ENCODE measurements at regions of chr6 and their contacts with region 1.

Region 1: DNA sequence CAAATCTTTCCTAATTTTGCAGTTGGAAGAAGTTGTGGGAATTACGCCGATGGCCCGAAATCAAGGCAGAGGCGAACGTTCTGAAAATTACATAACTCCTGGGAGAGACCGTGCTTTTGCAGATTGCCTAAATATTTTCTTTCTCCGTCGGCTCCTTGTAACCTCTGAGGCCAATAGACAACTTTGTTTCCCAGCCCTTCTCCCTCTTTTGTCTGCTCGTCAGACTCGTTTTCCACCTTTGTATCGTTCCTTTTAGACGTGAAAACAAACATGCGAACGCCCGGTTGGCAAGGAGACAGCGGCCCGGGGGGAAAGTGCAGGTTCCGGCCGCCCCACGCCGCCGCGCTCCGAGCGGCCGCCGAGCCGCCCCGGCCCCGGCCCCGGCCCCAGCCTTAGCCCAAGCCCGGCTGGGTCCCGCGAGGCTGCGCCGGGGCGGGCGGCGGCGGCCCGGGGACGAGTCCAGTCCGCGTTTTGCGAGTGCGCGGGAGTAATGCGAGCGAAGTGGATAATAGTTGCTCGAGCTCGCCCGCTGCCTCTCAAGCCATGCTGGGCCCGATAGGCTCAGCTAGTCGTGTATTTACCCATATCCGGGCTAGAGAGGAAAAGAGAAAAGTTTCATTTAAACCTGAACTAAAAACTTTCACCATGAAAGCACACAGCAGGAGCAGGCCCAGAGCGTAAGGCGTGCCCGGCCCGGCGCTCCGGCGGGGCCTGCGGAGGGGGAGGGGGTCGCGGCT is at the start of gene ARID1B:
- DNase-seq: no peak
- ATAC-seq: peak; percentile 59
- H3K4me3 ChIP-seq: peak within 1 kb of the TSS; percentile 92
- H3K27ac ChIP-seq: peak within 1 kb of the TSS; percentile 94
- H3K4me1 ChIP-seq: peaks cover 17% of the 10 kb centered on the region
- H3K27me3 ChIP-seq: no peaks in the 10 kb centered on the region
- CTCF ChIP-seq: no peak
- EP300 ChIP-seq: no peak
- POLR2A ChIP-seq: peak; percentile 76
- RAD21 ChIP-seq: no peak
- polyA plus RNA-seq, gene ARID1B: 37.7 to 73.9 TPM

Region 2: GRCh38 chr6:156396068-156396771 is 380.8 kb before region 1 on chr6:
- CTCF ChIA-PET with region 1: no interaction called
- POLR2A ChIA-PET with region 1: no interaction called
- RAD21 ChIA-PET with region 1: no interaction called
- SMC1A ChIA-PET with region 1: no interaction called
- in situ Hi-C with region 1: no loop called
- intact Hi-C with region 1: loop called (anchors 10 kb)
- DNase-seq: peak; percentile 63
- ATAC-seq: peak; percentile 76
- H3K4me3 ChIP-seq: peak overlapping the region; percentile 46; the same call in 1 of the 2 replicates
- H3K27ac ChIP-seq: peak overlapping the region; percentile 68; the same call in 1 of the 2 replicates
- H3K4me1 ChIP-seq: peaks cover 27% of the 10 kb centered on the region
- H3K27me3 ChIP-seq: peaks cover 0 to 26% of the 10 kb centered on the region in 2 experiments; a peak in 2 of 4 replicates
- CTCF ChIP-seq: no peak
- EP300 ChIP-seq: no peak
- POLR2A ChIP-seq: no peak
- RAD21 ChIP-seq: no peak

Region 3: DNA sequence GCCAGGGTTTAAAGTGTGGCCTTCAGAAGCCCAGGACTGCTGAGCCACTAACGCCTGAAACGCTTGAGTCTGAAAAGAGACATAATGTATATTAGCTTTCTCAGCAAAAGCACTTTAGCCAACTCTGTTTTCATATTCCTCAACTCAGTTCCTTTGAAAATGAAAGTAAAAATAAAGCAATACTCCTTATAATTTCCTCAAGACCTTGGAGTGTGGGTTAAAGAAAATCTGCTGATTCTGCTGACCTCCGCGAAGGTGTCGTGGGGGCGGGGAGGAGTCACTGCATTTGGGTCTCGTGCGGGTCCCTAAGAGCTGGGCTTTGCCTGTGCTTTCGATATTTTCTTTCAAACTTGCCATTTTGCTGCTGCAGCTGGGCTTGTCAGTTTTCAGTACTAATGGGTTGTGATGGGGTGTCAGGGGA is 142.0 kb before region 1 on chr6:
- CTCF ChIA-PET with region 1: interaction called, 6 read pairs
- POLR2A ChIA-PET with region 1: interaction called, 5 read pairs
- RAD21 ChIA-PET with region 1: interaction called, 30 read pairs
- SMC1A ChIA-PET with region 1: interaction called, 3 read pairs
- in situ Hi-C with region 1: no loop called
- intact Hi-C with region 1: loop called (anchors 2 kb)
- DNase-seq: no peak
- ATAC-seq: no peak
- H3K4me3 ChIP-seq: no peak overlapping the region; the same call in 1 of the 2 replicates
- H3K27ac ChIP-seq: peak overlapping the region; percentile 83
- H3K4me1 ChIP-seq: peaks cover 32% of the 10 kb centered on the region
- H3K27me3 ChIP-seq: no peaks in the 10 kb centered on the region
- CTCF ChIP-seq: no peak
- EP300 ChIP-seq: no peak
- POLR2A ChIP-seq: no peak
- RAD21 ChIP-seq: no peak

Region 4: GRCh38 chr6:156686995-156687788 is 89.8 kb before region 1 on chr6:
- CTCF ChIA-PET with region 1: interaction called, 4 read pairs
- POLR2A ChIA-PET with region 1: interaction called, 12 read pairs
- RAD21 ChIA-PET with region 1: interaction called, 29 read pairs
- SMC1A ChIA-PET with region 1: interaction called, 4 read pairs
- in situ Hi-C with region 1: no loop called
- intact Hi-C with region 1: loop called (anchors 1 kb)
- DNase-seq: no peak
- ATAC-seq: peak; percentile 69
- H3K4me3 ChIP-seq: peak overlapping the region; percentile 93
- H3K27ac ChIP-seq: peak overlapping the region; percentile 98
- H3K4me1 ChIP-seq: peaks cover 48% of the 10 kb centered on the region
- H3K27me3 ChIP-seq: no peaks in the 10 kb centered on the region
- CTCF ChIP-seq: no peak
- EP300 ChIP-seq: peak in 1 of 2 experiments; percentile 27; a peak in 1 of 4 replicates
- POLR2A ChIP-seq: peak; percentile 85
- RAD21 ChIP-seq: no peak; the same call in 1 of the 2 replicates

Region 5: DNA sequence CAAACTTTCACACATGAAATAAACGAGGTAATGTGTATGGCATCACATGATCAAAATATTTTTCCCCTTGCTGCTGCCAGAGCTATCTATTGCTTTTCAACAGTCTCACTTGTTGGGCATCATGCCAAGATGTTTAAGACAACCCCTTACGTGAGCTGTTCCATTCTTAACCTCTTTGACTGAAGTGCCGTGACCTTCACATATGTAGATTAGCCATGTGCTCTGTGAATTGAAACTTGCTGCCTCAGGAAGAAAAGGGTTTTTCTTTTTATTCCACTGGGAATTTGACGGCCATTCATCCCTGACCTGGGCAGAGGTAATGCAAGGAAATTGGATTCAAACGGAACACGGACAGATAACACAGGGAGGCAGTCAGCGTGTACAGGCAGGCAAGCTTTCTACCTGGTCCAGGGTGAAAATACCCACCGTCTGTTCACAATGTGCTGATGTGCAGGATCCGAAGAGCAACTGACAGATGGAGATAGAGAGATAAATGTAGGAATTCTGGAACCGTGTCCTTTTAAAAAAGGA is 14.4 kb after region 1 on chr6:
- CTCF ChIA-PET with region 1: interaction called, 7 read pairs
- POLR2A ChIA-PET with region 1: interaction called, 10 read pairs
- RAD21 ChIA-PET with region 1: interaction called, 9 read pairs
- SMC1A ChIA-PET with region 1: interaction called, 14 read pairs
- in situ Hi-C with region 1: no loop called
- intact Hi-C with region 1: no loop called
- DNase-seq: peak; percentile 72
- ATAC-seq: peak; percentile 56
- H3K4me3 ChIP-seq: peak overlapping the region; percentile 24; the same call in 1 of the 2 replicates
- H3K27ac ChIP-seq: peak overlapping the region; percentile 23
- H3K4me1 ChIP-seq: peaks cover 50% of the 10 kb centered on the region
- H3K27me3 ChIP-seq: no peaks in the 10 kb centered on the region
- CTCF ChIP-seq: no peak
- EP300 ChIP-seq: no peak
- POLR2A ChIP-seq: 0 out of 2 replicates have a peak, but pooled peaks have one; percentile 36
- RAD21 ChIP-seq: no peak

Region 6: DNA sequence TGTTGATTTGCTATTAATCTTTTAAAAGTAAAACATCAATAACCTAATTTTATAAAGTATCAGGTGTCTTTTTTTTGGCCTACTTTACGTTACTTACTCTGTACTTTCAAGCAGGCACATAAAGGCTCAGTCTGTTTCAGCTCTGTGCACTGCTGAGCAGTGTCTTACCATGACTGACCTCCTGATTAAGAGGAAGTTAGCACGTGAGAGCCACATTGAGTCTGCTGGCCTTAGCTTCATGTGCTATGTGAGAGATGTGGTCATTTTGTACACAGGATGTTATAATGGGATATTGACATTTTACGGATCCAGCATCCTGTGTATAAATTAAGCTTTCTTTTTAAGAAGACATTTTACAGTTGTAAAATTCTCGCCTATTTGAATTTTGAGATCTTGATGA is 32.0 kb after region 1 on chr6:
- CTCF ChIA-PET with region 1: no interaction called
- POLR2A ChIA-PET with region 1: interaction called, 4 read pairs
- RAD21 ChIA-PET with region 1: interaction called, 4 read pairs
- SMC1A ChIA-PET with region 1: interaction called, 10 read pairs
- in situ Hi-C with region 1: no loop called
- intact Hi-C with region 1: no loop called
- DNase-seq: peak; percentile 55
- ATAC-seq: peak; percentile 98
- H3K4me3 ChIP-seq: no peak overlapping the region
- H3K27ac ChIP-seq: peak overlapping the region; percentile 27
- H3K4me1 ChIP-seq: peaks cover 24% of the 10 kb centered on the region
- H3K27me3 ChIP-seq: no peaks in the 10 kb centered on the region
- CTCF ChIP-seq: no peak
- EP300 ChIP-seq: 0 out of 4 replicates have a peak, but pooled peaks of 1 of the 2 experiments have one; percentile 13
- POLR2A ChIP-seq: 0 out of 2 replicates have a peak, but pooled peaks have one; percentile 35
- RAD21 ChIP-seq: no peak

Region 7: GRCh38 chr6:157021344-157021992 is 244.5 kb after region 1 on chr6:
- CTCF ChIA-PET with region 1: interaction called, 5 read pairs
- POLR2A ChIA-PET with region 1: no interaction called
- RAD21 ChIA-PET with region 1: interaction called, 5 read pairs
- SMC1A ChIA-PET with region 1: interaction called, 3 read pairs
- in situ Hi-C with region 1: no loop called
- intact Hi-C with region 1: loop called (anchors 2 kb)
- DNase-seq: no peak
- ATAC-seq: peak; percentile 88
- H3K4me3 ChIP-seq: peak overlapping the region; percentile 86
- H3K27ac ChIP-seq: peak overlapping the region; percentile 95
- H3K4me1 ChIP-seq: peaks cover 32% of the 10 kb centered on the region
- H3K27me3 ChIP-seq: no peaks in the 10 kb centered on the region
- CTCF ChIP-seq: peak; percentile 17 to 42 (median 19); a peak in 4 of 6 replicates
- EP300 ChIP-seq: peak in 1 of 2 experiments; percentile 20; a peak in 1 of 4 replicates
- POLR2A ChIP-seq: peak; percentile 98
- RAD21 ChIP-seq: peak; percentile 17; the same call in 1 of the 2 replicates

Measured in GM12878 (cell line).